PC-9 (cell line): ENCODE measurements at regions of chr11 and their contacts with region 1.

Region 1: GRCh38 chr11:5684646-5685362 is at the start of gene TRIM5:
- DNase-seq: peak; percentile 66 to 89
- H3K4me3 ChIP-seq: peak within 1 kb of the TSS; percentile 61
- H3K27ac ChIP-seq: peak within 1 kb of the TSS; percentile 93
- H3K4me1 ChIP-seq: peaks cover 14% of the 10 kb centered on the region
- H3K27me3 ChIP-seq: no peaks in the 10 kb centered on the region
- CTCF ChIP-seq: peak; percentile 49; the same call in 1 of the 2 replicates
- total RNA-seq, gene TRIM5: 19.1 and 20.5 TPM in 2 replicates

Region 2: GRCh38 chr11:5620646-5621521 is 63.9 kb before region 1 on chr11:
- CTCF ChIA-PET with region 1: no interaction called
- POLR2A ChIA-PET with region 1: interaction called, 7 read pairs
- intact Hi-C with region 1: loop called (anchors 1 kb)
- DNase-seq: peak; percentile 42 to 91
- H3K4me3 ChIP-seq: peak overlapping the region; percentile 60; the same call in 1 of the 2 replicates
- H3K27ac ChIP-seq: peak overlapping the region; percentile 98
- H3K4me1 ChIP-seq: peaks cover 51% of the 10 kb centered on the region
- H3K27me3 ChIP-seq: no peaks in the 10 kb centered on the region
- CTCF ChIP-seq: no peak

Region 3: DNA sequence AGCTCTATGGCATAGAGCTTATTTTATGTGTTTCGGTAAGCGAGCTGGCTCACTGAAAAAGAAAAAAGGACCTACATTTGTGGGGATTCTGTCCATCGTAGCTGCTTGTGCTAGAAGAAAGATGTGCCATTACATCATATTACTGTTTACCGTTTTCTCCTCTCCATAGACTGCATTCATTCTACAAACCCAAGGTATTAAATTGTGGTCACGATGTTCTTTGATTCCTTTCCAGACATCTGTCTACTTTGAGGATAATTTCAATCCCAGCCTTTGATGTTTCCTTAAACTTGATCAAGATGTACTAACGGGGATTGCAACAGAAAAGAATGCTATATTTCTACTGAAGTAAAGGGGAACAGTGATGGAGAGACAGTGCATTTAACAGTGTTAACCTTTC is 111.7 kb after region 1 on chr11:
- CTCF ChIA-PET with region 1: no interaction called
- POLR2A ChIA-PET with region 1: no interaction called
- intact Hi-C with region 1: no loop called
- DNase-seq: no peak
- H3K4me3 ChIP-seq: no peak overlapping the region
- H3K27ac ChIP-seq: no peak overlapping the region
- H3K4me1 ChIP-seq: no peaks in the 10 kb centered on the region
- H3K27me3 ChIP-seq: no peaks in the 10 kb centered on the region
- CTCF ChIP-seq: no peak

Region 4: GRCh38 chr11:5865826-5866225 is 181.0 kb after region 1 on chr11:
- CTCF ChIA-PET with region 1: no interaction called
- POLR2A ChIA-PET with region 1: no interaction called
- intact Hi-C with region 1: no loop called
- DNase-seq: no peak
- H3K4me3 ChIP-seq: no peak overlapping the region
- H3K27ac ChIP-seq: no peak overlapping the region
- H3K4me1 ChIP-seq: no peaks in the 10 kb centered on the region
- H3K27me3 ChIP-seq: no peaks in the 10 kb centered on the region
- CTCF ChIP-seq: no peak